Activated T-helper 1 cell treated with anti-CD3 and anti-CD28 coated beads, Interleukin-12 subunit alpha, Interleukin-12 subunit beta, Interleukin-2, Interleukin-4 antibody, amounts not matched to agents 30 ng/mL and 10 ng/mL and 1 ng/mL, durations not matched to agents 14 hours and 24 hours and 36 hours (primary cell): ENCODE measurements at regions of chr21 and their contacts with region 1.

Region 1: DNA sequence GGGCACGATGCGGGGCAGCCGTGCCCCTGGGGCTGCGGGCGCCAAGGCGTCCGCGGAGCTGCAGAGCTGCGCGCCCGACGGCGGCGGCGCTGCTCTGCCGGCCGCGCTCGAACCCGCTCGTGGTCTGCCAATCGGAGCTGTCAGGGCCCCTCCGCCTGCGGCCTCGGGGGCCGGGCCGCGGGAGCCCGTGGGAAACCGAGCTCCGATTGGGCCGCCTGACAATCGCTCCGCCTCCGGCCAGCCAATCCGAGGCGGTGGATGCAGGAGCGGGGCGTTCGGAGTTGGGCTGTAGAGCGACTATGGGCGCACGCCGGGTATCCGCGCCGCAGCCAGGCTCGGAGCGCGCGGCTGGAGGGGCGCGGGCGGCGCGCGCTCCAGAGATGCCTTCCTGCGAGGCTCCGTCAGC is 100.5 kb upstream of the SOD1 start:
- DNase-seq: peak; percentile 93
- H3K4me3 Mint-ChIP-seq: peak overlapping the region; percentile 89
- H3K27ac Mint-ChIP-seq: no peak overlapping the region
- H3K4me1 Mint-ChIP-seq: peaks cover 48% of the 10 kb centered on the region
- H3K27me3 Mint-ChIP-seq: peaks cover 35% of the 10 kb centered on the region

Region 2: DNA sequence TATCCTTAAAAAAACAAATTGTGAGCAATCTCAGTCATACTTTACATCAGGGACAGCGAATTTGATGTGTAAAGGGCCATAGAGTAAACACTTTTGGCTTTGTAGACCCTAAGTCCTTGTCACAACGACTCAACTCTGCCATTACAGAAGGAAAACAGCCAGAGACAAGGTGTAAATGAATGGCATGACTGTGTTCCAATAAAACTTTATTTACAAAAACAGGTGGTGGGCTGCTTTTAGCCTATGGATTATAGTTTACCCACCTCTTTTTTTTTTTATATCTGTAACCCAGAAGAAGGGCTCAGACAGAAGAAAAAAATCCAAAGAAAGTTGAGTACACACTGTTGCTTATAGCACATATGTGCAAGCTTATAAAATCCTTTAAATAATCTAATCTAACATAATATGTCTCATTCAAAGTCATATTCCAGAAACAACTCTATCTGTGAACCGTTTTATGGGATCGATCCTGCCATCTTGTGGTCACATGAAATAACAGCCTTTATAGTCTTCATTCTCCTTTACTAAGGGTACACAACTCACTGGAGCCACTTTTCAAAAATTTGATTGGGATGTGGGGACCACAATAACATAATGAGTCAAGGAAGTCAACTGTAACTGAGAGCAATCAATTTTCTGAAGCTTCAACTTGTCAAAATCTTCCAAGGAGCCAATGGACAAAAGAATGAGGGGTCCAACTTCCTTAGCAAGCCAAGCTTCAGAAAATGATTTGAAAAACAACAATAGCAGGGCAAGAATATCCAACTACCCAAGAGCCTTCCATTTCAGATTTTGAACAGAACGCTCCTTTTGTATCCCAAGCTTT is 378.5 kb before region 1 on chr21:
- intact Hi-C with region 1: loop called (anchors 1 kb)
- DNase-seq: no peak
- H3K4me3 Mint-ChIP-seq: peak overlapping the region; percentile 92
- H3K27ac Mint-ChIP-seq: peak overlapping the region; percentile 98
- H3K4me1 Mint-ChIP-seq: peaks cover 70% of the 10 kb centered on the region
- H3K27me3 Mint-ChIP-seq: no peaks in the 10 kb centered on the region

Region 3: GRCh38 chr21:31335957-31336738 is 222.8 kb before region 1 on chr21:
- intact Hi-C with region 1: loop called (anchors 1 kb)
- DNase-seq: no peak
- H3K4me3 Mint-ChIP-seq: peak overlapping the region; percentile 17
- H3K27ac Mint-ChIP-seq: peak overlapping the region; percentile 67
- H3K4me1 Mint-ChIP-seq: peaks cover 78% of the 10 kb centered on the region
- H3K27me3 Mint-ChIP-seq: no peaks in the 10 kb centered on the region

Region 4: DNA sequence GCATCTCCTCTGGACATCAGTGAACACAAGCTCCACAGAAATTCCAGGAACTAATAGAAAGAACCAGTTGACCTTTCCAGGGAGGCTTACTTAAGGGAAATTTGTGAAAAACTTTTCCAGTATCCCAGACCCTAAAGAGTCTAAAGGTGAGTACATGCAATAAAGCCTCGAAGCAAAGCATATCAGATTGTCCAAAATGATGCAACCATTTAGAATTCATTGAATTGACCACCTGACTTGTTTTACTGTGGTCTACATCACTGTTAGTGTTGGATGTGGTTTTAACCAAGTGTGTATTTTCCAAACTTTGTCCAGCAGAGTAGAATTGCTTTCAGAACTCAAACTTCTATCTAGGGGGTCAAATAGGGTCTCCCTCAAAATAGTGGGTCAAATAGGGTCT is 138.6 kb before region 1 on chr21:
- intact Hi-C with region 1: no loop called
- DNase-seq: no peak
- H3K4me3 Mint-ChIP-seq: no peak overlapping the region
- H3K27ac Mint-ChIP-seq: no peak overlapping the region
- H3K4me1 Mint-ChIP-seq: no peaks in the 10 kb centered on the region
- H3K27me3 Mint-ChIP-seq: peaks cover 9% of the 10 kb centered on the region

Region 5: DNA sequence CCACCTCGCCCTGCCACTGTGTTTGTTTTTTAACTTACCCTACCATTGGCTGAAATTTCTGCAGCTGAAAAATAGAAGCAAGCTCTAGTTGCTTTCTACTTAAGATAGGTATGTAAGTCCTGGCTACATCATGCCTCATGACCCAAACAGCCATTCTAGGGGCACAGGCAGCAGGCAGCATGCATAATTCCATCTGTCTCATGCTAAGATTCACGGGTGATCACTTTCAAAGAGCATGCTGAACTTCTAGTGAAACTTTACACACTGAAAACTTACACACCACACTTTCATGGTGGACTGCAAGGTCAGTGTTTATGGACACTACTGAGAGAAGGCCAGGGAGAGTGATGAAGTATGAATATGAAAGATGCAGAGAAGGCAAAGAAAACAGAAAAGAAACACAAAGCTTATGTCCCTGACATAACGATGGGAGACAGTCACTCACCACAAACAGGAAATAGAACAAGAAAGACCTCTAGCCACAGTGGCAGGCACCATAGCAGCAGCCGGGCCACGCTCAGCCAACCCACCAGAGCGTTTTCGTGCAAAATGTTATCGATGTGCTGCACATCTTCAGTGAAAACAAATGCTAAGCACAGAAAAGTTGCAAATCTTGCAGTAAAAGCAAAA is 112.6 kb before region 1 on chr21:
- intact Hi-C with region 1: loop called (anchors 5 kb)
- DNase-seq: peak; percentile 49
- H3K4me3 Mint-ChIP-seq: peak overlapping the region; percentile 68
- H3K27ac Mint-ChIP-seq: peak overlapping the region; percentile 91
- H3K4me1 Mint-ChIP-seq: peaks cover 47% of the 10 kb centered on the region
- H3K27me3 Mint-ChIP-seq: peaks cover 6% of the 10 kb centered on the region

Region 6: GRCh38 chr21:31659536-31660258 is 100.7 kb after region 1 on chr21 and contains the start of gene SOD1:
- intact Hi-C with region 1: loop called (anchors 2 kb)
- DNase-seq: peak; percentile 96
- H3K4me3 Mint-ChIP-seq: peak within 1 kb of the TSS; percentile 99
- H3K27ac Mint-ChIP-seq: peak within 1 kb of the TSS; percentile 100
- H3K4me1 Mint-ChIP-seq: peaks cover 76% of the 10 kb centered on the region
- H3K27me3 Mint-ChIP-seq: no peaks in the 10 kb centered on the region
- total RNA-seq, gene SOD1: 346 and 354 TPM in 2 replicates

Region 7: GRCh38 chr21:32096411-32096810 is 537.4 kb after region 1 on chr21:
- intact Hi-C with region 1: no loop called
- DNase-seq: no peak
- H3K4me3 Mint-ChIP-seq: no peak overlapping the region
- H3K27ac Mint-ChIP-seq: no peak overlapping the region
- H3K4me1 Mint-ChIP-seq: no peaks in the 10 kb centered on the region
- H3K27me3 Mint-ChIP-seq: no peaks in the 10 kb centered on the region